ENCODE measurements at regions of chr5 and their contacts with region 1.

Region 1: DNA sequence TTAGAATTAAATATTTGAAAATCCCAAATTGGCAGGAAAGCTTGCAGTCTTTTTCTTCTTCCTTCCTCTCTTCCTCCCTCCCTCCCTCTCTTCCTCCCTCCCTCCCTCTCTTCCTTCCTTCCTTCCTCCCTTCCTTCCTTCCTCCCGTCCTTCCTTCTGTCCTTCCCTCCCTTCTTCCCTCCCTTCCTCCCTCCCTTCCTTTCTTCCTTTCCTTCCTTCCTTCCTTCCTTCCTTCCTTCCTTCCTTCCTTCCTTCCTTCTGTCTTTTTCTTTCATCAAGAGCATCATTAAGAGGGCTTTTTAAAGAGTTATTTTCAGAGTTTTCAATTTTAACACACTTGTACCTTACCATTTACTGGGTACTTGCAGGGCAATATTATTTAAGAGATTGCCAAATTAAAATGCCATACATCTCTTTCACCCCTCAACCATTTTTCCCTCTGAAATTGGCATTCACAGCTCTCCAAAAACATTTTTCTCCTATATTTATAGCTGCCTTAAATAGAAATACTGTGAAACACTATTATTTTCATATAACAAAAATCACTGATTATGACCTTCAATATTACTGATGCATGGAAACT is 99.2 kb upstream of the C6 start:
- DNase-seq: no peak
- H3K4me3 ChIP-seq: no peak overlapping the region
- H3K27ac ChIP-seq: no peak overlapping the region
- H3K4me1 ChIP-seq: no peaks in the 10 kb centered on the region
- H3K27me3 ChIP-seq: peaks cover 6% of the 10 kb centered on the region
- CTCF ChIP-seq: no peak

Region 2: GRCh38 chr5:41465493-41466171 is 153.1 kb after region 1 on chr5:
- CTCF ChIA-PET with region 1: no interaction called
- dilution Hi-C with region 1: no loop called
- in situ Hi-C with region 1: no loop called
- intact Hi-C with region 1: no loop called
- DNase-seq: no peak
- H3K4me3 ChIP-seq: no peak overlapping the region
- H3K27ac ChIP-seq: no peak overlapping the region
- H3K4me1 ChIP-seq: no peaks in the 10 kb centered on the region
- H3K27me3 ChIP-seq: no peaks in the 10 kb centered on the region
- CTCF ChIP-seq: no peak

Region 3: DNA sequence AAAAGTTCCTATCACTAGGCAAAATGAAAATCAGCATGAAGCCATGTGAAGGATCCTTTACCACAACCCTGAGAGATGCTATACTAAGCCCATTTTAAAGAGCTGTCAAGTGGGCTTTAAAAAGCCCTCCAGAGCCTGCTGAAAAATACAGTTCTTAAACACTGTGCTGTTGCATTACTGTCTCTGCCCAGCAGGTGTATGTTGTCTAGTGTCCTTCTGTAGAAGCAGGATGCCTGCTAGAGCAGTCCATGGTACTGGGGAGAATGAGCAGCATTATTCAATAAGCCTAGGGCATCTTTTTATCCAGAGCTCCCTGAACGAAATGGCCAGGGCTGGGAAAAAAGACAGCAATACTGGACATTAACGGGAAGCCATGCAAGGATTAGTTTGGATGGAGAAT is 324.0 kb after region 1 on chr5:
- CTCF ChIA-PET with region 1: no interaction called
- dilution Hi-C with region 1: no loop called
- in situ Hi-C with region 1: loop called in 1 of 2 experiments (anchors 25 kb)
- intact Hi-C with region 1: no loop called
- DNase-seq: peak; percentile 10
- H3K4me3 ChIP-seq: no peak overlapping the region
- H3K27ac ChIP-seq: no peak overlapping the region
- H3K4me1 ChIP-seq: no peaks in the 10 kb centered on the region
- H3K27me3 ChIP-seq: no peaks in the 10 kb centered on the region
- CTCF ChIP-seq: peak; percentile 37 to 48

Measured in mammary epithelial cell (primary cell).